ENCODE measurements at regions of chr9 and their contacts with region 1.

Region 1: DNA sequence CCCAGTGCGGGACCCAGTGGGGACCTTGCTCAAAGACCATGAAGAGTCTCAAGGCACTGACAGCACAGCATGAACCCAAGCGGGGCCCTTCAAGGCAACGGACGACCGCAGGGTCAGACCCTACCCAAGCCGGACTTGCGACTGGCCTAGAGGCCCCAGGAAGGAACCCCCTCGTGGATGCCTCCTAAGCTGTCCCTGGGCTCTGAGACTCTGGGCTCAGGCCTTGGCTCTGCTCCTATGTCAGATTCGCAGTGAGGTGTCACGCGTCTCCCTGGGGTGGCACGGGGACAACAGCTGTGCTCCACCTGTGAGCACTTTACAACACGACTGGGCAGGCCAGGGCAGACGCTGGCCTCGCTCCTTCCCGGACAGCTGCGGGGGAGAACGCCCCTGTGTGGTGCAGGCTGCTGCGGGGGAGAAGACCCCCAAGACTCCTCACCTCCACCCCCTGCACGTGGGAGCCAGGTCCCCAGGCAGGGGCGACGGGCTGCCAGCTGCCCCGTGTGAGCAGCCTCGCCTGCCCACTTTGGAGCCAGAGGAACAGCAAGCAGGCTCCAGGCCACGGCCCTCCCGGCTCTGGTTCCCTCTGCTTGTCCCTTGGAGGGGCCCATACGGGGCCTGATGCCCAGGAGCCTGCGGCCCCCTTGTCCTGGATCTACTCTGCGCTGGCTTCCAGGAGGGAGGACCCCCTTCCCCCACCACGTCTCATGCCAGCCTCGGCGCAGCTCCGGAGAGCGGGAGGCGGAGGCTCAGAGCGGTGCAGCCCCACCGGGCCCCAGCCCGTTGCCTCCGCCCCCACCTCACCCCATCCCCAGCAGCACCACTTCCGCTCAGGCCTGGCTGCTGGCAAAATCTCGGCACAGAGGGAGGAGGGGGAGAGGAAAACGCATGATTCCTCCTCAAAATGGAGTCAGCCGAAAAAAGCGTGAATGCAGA is 36.0 kb downstream of the SARDH start:
- DNase-seq: peak; percentile 85
- H3K4me3 Mint-ChIP-seq: peak overlapping the region; percentile 86
- H3K27ac Mint-ChIP-seq: peak overlapping the region; percentile 93
- H3K4me1 Mint-ChIP-seq: peaks cover 45% of the 10 kb centered on the region
- H3K27me3 Mint-ChIP-seq: no peaks in the 10 kb centered on the region

Region 2: GRCh38 chr9:133420392-133420827 is 281.7 kb before region 1 on chr9:
- CTCF ChIA-PET with region 1: no interaction called
- POLR2A ChIA-PET with region 1: no interaction called
- intact Hi-C with region 1: no loop called
- DNase-seq: peak; percentile 39
- H3K4me3 Mint-ChIP-seq: no peak overlapping the region
- H3K27ac Mint-ChIP-seq: peak overlapping the region; percentile 81
- H3K4me1 Mint-ChIP-seq: peaks cover 46% of the 10 kb centered on the region
- H3K27me3 Mint-ChIP-seq: peaks cover 4% of the 10 kb centered on the region

Region 3: DNA sequence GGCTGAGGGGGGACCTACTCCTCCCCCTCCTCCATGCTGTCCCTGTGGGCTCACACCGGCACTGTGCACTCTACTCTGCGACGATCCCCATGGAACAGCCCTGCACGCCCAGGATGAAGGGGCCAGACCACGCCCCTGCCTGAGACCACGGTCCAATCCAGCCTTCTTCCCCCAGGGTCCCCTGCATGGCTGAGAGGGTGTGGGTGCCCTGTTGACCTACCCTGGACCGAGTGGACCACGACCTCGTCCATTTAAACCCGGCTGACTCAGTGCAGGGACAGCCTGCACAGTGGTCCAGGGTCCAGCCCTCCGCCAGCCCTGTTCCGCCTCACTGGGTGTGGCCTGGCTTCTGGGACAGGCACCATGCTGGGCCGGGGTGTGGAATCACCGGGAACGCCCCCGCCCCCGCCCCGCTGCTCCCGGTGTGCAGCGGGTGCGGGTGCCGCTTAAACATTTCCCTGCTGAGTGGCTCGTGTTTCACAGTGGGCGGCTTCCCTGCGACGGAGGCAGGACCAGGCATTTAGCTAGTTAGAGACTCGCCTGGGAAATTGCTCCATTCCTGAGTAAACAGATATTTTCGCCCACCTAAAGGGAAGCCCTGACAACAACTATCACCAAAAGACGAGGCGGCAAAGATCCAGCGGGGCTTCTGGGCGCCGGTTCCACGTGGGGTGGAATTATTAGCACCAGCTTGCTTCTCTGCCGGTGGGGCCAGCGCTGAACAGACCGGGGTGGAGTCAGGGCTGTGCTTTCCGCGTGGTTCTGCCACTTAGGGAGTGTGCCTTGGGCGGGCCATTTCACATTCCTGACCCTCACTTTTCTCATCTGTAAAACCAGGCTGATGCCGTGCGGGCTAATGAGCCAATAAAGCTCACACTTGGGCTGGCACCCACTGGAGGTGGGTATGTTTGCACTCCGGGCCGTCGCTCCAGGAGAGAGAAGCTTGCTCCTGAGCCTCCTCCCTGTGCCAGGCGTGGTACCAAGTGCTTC is 43.4 kb before region 1 on chr9:
- CTCF ChIA-PET with region 1: no interaction called
- POLR2A ChIA-PET with region 1: no interaction called
- intact Hi-C with region 1: loop called (anchors 5 kb)
- DNase-seq: peak; percentile 42
- H3K4me3 Mint-ChIP-seq: peak overlapping the region; percentile 8
- H3K27ac Mint-ChIP-seq: no peak overlapping the region
- H3K4me1 Mint-ChIP-seq: peaks cover 26% of the 10 kb centered on the region
- H3K27me3 Mint-ChIP-seq: peaks cover 42% of the 10 kb centered on the region

Region 4: DNA sequence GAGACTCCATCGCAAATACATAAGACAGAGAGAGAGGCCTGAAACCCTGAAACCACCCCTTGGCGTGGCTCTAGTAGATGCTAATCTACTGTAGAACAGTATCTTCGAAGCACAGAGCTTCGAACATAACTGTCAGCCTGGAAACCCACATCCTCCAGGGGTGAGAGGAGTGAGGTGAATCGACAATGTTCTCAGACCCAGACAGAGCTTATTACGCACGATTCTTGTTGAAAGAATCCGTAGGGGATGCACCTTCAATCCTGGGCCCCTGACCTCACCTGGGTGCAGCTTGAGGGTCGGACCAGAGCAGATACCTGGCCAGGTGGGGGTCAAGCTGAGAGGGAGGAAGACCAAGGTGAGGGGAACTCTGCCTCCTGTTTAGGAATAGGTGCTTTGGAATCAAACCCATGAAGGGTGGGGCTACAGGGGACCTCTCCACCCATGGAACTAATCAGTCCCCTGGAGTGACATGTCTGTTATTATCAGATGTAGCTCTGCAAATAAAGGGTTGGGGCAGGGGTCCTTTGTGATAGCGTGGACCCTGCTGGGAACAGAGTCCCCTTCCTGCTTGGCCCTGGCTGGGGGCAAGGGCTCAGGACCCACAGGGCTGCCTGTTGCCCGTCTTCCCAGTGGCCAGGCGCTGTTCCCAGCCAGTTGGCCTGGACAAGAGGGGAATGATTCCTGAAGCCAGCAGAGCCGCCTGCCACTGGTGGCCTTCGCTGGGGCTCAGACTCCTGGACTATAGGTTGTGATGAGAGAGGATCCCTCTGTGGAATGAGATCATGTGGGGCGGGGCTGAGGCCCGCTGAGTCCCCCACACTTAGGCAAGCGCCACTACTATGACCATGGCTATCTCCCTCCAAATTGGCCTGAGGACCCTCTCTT is 24.8 kb before region 1 on chr9:
- CTCF ChIA-PET with region 1: interaction called, 7 read pairs
- POLR2A ChIA-PET with region 1: interaction called, 8 read pairs
- intact Hi-C with region 1: loop called (anchors 2 kb)
- DNase-seq: peak; percentile 77
- H3K4me3 Mint-ChIP-seq: no peak overlapping the region
- H3K27ac Mint-ChIP-seq: peak overlapping the region; percentile 63
- H3K4me1 Mint-ChIP-seq: peaks cover 39% of the 10 kb centered on the region
- H3K27me3 Mint-ChIP-seq: no peaks in the 10 kb centered on the region

Region 5: GRCh38 chr9:133683586-133684120 is 18.5 kb before region 1 on chr9:
- CTCF ChIA-PET with region 1: interaction called, 8 read pairs
- POLR2A ChIA-PET with region 1: interaction called, 18 read pairs
- intact Hi-C with region 1: loop called (anchors 1 kb)
- DNase-seq: peak; percentile 77
- H3K4me3 Mint-ChIP-seq: peak overlapping the region; percentile 63
- H3K27ac Mint-ChIP-seq: peak overlapping the region; percentile 91
- H3K4me1 Mint-ChIP-seq: peaks cover 23% of the 10 kb centered on the region
- H3K27me3 Mint-ChIP-seq: no peaks in the 10 kb centered on the region

Region 6: GRCh38 chr9:133782157-133783130 is 80.3 kb after region 1 on chr9:
- CTCF ChIA-PET with region 1: no interaction called
- POLR2A ChIA-PET with region 1: no interaction called
- intact Hi-C with region 1: no loop called
- DNase-seq: peak; percentile 75
- H3K4me3 Mint-ChIP-seq: no peak overlapping the region
- H3K27ac Mint-ChIP-seq: no peak overlapping the region
- H3K4me1 Mint-ChIP-seq: no peaks in the 10 kb centered on the region
- H3K27me3 Mint-ChIP-seq: no peaks in the 10 kb centered on the region

Region 7: GRCh38 chr9:134243778-134244467 is 541.8 kb after region 1 on chr9:
- CTCF ChIA-PET with region 1: no interaction called
- POLR2A ChIA-PET with region 1: no interaction called
- intact Hi-C with region 1: no loop called
- DNase-seq: peak; percentile 57
- H3K4me3 Mint-ChIP-seq: no peak overlapping the region
- H3K27ac Mint-ChIP-seq: no peak overlapping the region
- H3K4me1 Mint-ChIP-seq: peaks cover 15% of the 10 kb centered on the region
- H3K27me3 Mint-ChIP-seq: peaks cover 2% of the 10 kb centered on the region